Right cardiac atrium (tissue), 5 donors: ENCODE measurements at regions of chr17 and their contacts with region 1.

Region 1: GRCh38 chr17:29777663-29778062 is 152.4 kb downstream of the SSH2 start:
- DNase-seq: no peak
- ATAC-seq: no peak
- H3K4me3 ChIP-seq: no peak overlapping the region
- H3K27ac ChIP-seq: no peak overlapping the region
- H3K4me1 ChIP-seq: no peaks in the 10 kb centered on the region
- H3K27me3 ChIP-seq: no peaks in the 10 kb centered on the region

Region 2: DNA sequence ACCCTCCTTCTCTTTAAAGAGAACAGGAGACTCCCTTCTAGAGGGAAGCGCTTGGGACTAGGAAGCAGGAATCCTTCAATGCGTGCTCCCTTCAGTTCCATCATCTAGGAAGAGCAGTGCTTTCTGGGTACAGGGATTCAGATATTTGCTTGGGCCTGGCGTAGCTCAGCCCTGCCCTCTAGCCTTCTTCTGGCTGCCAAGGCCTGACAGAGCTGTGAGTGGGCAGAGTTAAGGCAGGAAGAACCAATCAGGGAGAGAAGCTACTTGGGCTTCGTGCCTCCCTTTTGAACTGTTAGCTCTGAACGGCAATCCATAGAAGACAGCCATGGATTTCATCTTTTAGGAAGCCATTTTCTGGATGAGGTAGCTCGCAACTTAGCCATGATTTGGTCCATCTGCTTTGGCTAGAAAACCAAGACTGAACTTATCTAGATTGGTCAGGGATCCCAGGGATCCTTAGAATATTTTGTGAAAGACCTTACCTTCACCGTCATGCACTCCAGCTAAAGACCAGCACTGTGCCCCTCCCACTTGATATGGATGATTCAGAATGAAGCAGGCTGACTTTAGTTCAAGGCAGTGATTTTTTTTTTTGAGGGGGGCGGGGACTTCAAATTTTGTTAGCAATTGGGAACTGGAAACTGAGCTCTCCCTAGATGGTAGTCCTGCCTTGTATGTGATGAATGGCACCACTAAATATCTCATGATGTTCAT is 152.5 kb before region 1 on chr17:
- intact Hi-C with region 1: loop called in 1 of 4 experiments (anchors 5 kb)
- DNase-seq: peak; percentile 60 to 80 (median 68)
- ATAC-seq: peak; percentile 45 to 54
- H3K4me3 ChIP-seq: no peak overlapping the region
- H3K27ac ChIP-seq: peak overlapping the region; percentile 28
- H3K4me1 ChIP-seq: peaks cover 13% of the 10 kb centered on the region
- H3K27me3 ChIP-seq: no peaks in the 10 kb centered on the region

Region 3: DNA sequence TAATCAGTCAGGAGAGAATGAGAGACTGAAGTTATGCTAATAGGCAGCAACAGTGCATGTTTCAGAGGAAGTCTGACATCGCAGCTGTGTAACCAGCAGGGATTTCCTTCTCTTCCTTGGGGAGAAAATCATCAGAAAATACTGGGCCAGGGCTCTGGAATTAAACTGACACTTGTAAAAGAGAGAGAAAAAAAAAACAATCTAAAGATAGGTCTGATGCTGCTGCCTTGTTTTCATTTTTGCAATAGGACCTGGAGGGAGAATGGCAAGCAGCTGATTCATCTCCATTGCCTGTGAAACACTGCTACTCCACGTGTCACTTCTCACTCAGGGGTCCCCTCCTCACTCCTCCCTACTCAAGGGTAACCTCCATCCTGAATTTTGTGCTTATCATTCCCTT is 137.2 kb before region 1 on chr17:
- intact Hi-C with region 1: loop called in 3 of 4 experiments (anchors 5 kb)
- DNase-seq: no peak
- ATAC-seq: peak in 1 of 2 donors; percentile 38
- H3K4me3 ChIP-seq: no peak overlapping the region
- H3K27ac ChIP-seq: peak overlapping the region; percentile 94
- H3K4me1 ChIP-seq: peaks cover 18% of the 10 kb centered on the region
- H3K27me3 ChIP-seq: no peaks in the 10 kb centered on the region

Region 4: DNA sequence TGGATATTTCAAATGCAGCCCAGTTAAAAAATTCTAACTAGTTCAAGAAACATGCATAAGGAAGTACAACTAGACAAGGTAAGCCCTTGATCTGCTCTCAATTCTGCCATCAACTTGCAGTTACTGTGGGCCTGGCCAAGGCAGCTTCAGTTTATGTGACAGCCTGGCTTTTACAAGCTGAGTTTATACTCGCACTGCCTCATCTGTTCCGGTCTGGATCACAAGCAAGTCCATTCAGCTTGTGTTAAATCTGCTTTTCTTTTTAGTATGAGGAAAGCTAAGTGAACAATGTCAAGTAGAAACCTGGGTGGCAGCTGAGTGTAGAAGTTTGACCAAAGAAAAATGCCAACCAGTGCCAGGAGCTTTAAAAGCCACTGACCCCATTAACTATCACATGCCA is 78.4 kb before region 1 on chr17:
- intact Hi-C with region 1: no loop called
- DNase-seq: no peak
- ATAC-seq: peak in 1 of 2 donors; percentile 23
- H3K4me3 ChIP-seq: no peak overlapping the region
- H3K27ac ChIP-seq: peak overlapping the region; percentile 94
- H3K4me1 ChIP-seq: peaks cover 11% of the 10 kb centered on the region
- H3K27me3 ChIP-seq: no peaks in the 10 kb centered on the region

Region 5: GRCh38 chr17:29722411-29723198 is 55.1 kb before region 1 on chr17:
- intact Hi-C with region 1: no loop called
- DNase-seq: peak in 1 of 3 donors; percentile 34
- ATAC-seq: peak; percentile 91 to 92
- H3K4me3 ChIP-seq: peak overlapping the region; percentile 44
- H3K27ac ChIP-seq: peak overlapping the region; percentile 88
- H3K4me1 ChIP-seq: peaks cover 5% of the 10 kb centered on the region
- H3K27me3 ChIP-seq: no peaks in the 10 kb centered on the region

Region 6: GRCh38 chr17:29825604-29826003 is 47.9 kb after region 1 on chr17:
- intact Hi-C with region 1: no loop called
- DNase-seq: no peak
- ATAC-seq: no peak
- H3K4me3 ChIP-seq: no peak overlapping the region
- H3K27ac ChIP-seq: no peak overlapping the region
- H3K4me1 ChIP-seq: no peaks in the 10 kb centered on the region
- H3K27me3 ChIP-seq: no peaks in the 10 kb centered on the region